Caco-2 (cell line): ENCODE measurements at regions of chr6 and their contacts with region 1.

Region 1: GRCh38 chr6:87066449-87067333 is 28.2 kb downstream of the CGA start:
- DNase-seq: peak; percentile 44 to 51
- H3K4me3 ChIP-seq: peak overlapping the region; percentile 15; the same call in 1 of the 2 replicates
- H3K4me3 Mint-ChIP-seq: peak overlapping the region; percentile 69
- H3K27ac Mint-ChIP-seq: no peak overlapping the region
- H3K4me1 ChIP-seq: peaks cover 14% of the 10 kb centered on the region
- H3K4me1 Mint-ChIP-seq: peaks cover 26% of the 10 kb centered on the region
- H3K27me3 ChIP-seq: no peaks in the 10 kb centered on the region
- H3K27me3 Mint-ChIP-seq: no peaks in the 10 kb centered on the region
- CTCF ChIP-seq: peak; percentile 33 to 53

Region 2: DNA sequence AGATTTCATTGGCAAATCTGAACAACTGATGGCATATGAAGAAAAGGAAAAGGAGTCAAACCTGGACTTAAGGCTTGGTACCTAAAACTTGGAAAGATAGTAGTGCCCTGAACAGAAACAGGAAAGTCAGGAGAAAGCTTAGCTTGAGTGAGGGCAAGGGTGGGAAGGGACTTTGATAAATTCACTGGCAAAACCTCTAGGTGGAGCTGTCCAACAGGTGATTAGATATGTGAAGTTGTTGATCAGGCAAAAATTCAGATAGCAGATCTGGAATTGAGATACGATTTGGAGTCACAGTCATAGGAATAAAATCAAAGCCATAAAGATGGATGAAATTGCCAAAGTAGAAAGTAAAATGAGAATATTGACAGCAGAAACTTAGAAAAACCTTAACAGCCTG is 72.5 kb after region 1 on chr6:
- CTCF ChIA-PET with region 1: interaction called, 8 read pairs
- POLR2A ChIA-PET with region 1: no interaction called
- intact Hi-C with region 1: loop called (anchors 2 kb)
- DNase-seq: peak in 1 of 2 experiments; percentile 60
- H3K4me3 ChIP-seq: no peak overlapping the region
- H3K4me3 Mint-ChIP-seq: no peak overlapping the region
- H3K27ac Mint-ChIP-seq: no peak overlapping the region
- H3K4me1 ChIP-seq: no peaks in the 10 kb centered on the region
- H3K4me1 Mint-ChIP-seq: no peaks in the 10 kb centered on the region
- H3K27me3 ChIP-seq: no peaks in the 10 kb centered on the region
- H3K27me3 Mint-ChIP-seq: peaks cover 13% of the 10 kb centered on the region
- CTCF ChIP-seq: peak; percentile 61 to 71

Region 3: GRCh38 chr6:87237804-87238203 is 171.1 kb after region 1 on chr6:
- CTCF ChIA-PET with region 1: interaction called, 9 read pairs
- POLR2A ChIA-PET with region 1: no interaction called
- intact Hi-C with region 1: loop called (anchors 2 kb)
- DNase-seq: no peak
- H3K4me3 ChIP-seq: no peak overlapping the region
- H3K4me3 Mint-ChIP-seq: no peak overlapping the region
- H3K27ac Mint-ChIP-seq: no peak overlapping the region
- H3K4me1 ChIP-seq: peaks cover 13% of the 10 kb centered on the region
- H3K4me1 Mint-ChIP-seq: peaks cover 13% of the 10 kb centered on the region
- H3K27me3 ChIP-seq: no peaks in the 10 kb centered on the region
- H3K27me3 Mint-ChIP-seq: no peaks in the 10 kb centered on the region
- CTCF ChIP-seq: peak; percentile 25 to 49

Region 4: DNA sequence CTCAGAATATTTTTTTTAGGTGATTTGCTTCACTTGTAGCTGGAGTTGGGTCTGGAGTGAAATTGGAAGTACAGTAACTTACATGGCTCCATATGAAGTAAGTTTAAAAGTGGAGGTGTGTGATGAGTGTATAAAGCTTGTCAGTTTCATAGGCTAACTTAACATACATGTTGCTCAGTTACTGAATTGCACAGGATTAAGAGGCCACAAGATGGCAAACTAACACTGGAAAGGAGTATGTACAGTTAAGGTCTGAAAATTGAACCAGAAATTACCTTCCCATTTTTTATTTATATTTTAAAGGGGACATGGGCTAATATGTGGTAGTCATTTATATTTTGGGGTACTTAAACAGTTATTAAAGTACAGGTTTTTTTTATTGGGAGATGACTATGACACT is 210.4 kb after region 1 on chr6:
- CTCF ChIA-PET with region 1: interaction called, 6 read pairs
- POLR2A ChIA-PET with region 1: no interaction called
- intact Hi-C with region 1: loop called (anchors 1 kb)
- DNase-seq: peak in 1 of 2 experiments; percentile 12
- H3K4me3 ChIP-seq: no peak overlapping the region
- H3K4me3 Mint-ChIP-seq: no peak overlapping the region
- H3K27ac Mint-ChIP-seq: no peak overlapping the region
- H3K4me1 ChIP-seq: no peaks in the 10 kb centered on the region
- H3K4me1 Mint-ChIP-seq: no peaks in the 10 kb centered on the region
- H3K27me3 ChIP-seq: no peaks in the 10 kb centered on the region
- H3K27me3 Mint-ChIP-seq: no peaks in the 10 kb centered on the region
- CTCF ChIP-seq: peak in 1 of 2 experiments; percentile 47

Region 5: GRCh38 chr6:87333033-87333432 is 266.3 kb after region 1 on chr6:
- CTCF ChIA-PET with region 1: no interaction called
- POLR2A ChIA-PET with region 1: no interaction called
- intact Hi-C with region 1: no loop called
- DNase-seq: no peak
- H3K4me3 ChIP-seq: no peak overlapping the region
- H3K4me3 Mint-ChIP-seq: no peak overlapping the region
- H3K27ac Mint-ChIP-seq: no peak overlapping the region
- H3K4me1 ChIP-seq: no peaks in the 10 kb centered on the region; the same call in 1 of the 2 replicates
- H3K4me1 Mint-ChIP-seq: peaks cover 20% of the 10 kb centered on the region
- H3K27me3 ChIP-seq: no peaks in the 10 kb centered on the region
- H3K27me3 Mint-ChIP-seq: no peaks in the 10 kb centered on the region
- CTCF ChIP-seq: no peak

Region 6: DNA sequence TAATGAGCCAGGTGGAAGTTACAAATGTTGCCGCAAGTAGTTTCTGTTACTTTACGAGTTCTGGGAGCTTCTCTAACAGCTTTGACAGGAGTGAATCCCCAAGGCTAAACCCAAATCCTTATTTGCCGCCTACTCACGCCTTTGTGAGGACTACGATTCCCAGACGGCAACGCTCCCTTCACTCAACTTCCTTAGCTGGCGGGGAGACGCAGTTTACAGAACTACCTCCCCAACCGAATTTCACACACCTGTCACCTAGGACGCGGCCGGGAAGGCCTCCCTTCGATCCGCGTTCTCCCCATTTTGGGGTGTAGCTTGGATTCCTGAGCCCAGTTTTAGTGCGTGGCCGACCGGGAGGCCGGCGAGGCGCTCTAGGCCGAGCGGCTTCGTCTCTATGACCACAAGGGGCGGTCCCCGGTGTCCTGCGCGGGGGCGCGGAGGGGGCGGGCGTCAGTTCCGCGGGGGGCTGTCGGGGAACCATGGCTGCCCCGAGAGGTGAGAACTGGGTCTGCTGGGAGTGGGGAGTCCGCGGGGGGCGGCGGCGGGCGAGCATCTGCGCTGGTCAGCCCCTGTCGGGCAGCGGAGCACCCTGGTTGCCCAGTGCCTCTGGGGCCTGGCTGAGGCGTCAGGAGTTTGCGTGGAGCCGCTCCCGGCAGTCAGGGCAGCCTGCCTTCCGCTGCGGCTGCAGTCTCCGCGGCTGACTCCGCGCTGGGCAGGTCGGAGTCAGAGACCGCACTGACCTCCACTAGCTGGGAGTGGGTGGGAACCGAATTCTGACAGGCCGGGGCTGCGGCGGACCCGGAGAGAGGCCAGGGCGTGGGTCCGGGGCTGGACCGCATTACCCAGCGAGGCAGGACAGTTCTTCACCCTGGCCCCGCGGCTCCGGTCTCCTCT is 406.1 kb after region 1 on chr6 and contains the start of gene SLC35A1:
- CTCF ChIA-PET with region 1: interaction called, 4 read pairs
- POLR2A ChIA-PET with region 1: no interaction called
- intact Hi-C with region 1: loop called (anchors 10 kb)
- DNase-seq: peak; percentile 73 to 86
- H3K4me3 ChIP-seq: peak within 1 kb of the TSS; percentile 84
- H3K4me3 Mint-ChIP-seq: peak within 1 kb of the TSS; percentile 84
- H3K27ac Mint-ChIP-seq: peak within 1 kb of the TSS; percentile 93
- H3K4me1 ChIP-seq: no peaks in the 10 kb centered on the region
- H3K4me1 Mint-ChIP-seq: no peaks in the 10 kb centered on the region
- H3K27me3 ChIP-seq: no peaks in the 10 kb centered on the region
- H3K27me3 Mint-ChIP-seq: peaks cover 2% of the 10 kb centered on the region
- CTCF ChIP-seq: peak; percentile 14 to 25
- total RNA-seq, gene SLC35A1: 12.3 and 12.7 TPM in 2 replicates